ENCODE measurements at regions of chr9 and their contacts with region 1.

Region 1: DNA sequence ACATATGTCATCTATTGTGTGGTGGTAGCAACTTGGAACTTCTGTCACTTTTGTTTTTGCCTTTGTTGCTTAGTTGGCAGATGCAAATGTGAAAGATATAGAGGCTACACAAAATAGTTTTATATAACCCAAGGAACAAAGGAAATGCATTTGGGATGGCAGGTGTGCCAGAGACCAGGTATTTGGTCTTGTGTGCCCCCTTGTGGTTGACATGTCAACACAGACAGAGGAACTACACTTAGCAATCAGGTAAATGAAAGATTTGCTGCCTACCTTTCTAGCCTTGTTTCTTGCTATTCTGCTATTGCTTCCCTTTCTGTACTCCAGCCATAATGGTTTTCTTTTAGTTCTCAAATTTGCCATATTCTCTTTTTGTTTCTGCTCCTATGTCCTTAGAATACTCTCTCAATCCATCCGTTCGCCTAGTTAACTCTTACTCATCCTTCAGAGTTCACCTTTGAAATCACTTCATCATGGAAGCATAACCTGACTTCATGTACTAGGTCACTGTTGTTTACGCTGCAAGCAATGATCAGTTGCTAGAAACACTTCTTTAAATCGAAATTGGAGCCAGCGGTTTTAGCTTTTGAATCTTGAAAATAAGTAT is 119.5 kb downstream of the TRPM3 start:
- DNase-seq: peak; percentile 61
- H3K4me3 Mint-ChIP-seq: no peak overlapping the region
- H3K27ac Mint-ChIP-seq: no peak overlapping the region
- H3K4me1 Mint-ChIP-seq: no peaks in the 10 kb centered on the region
- H3K27me3 Mint-ChIP-seq: no peaks in the 10 kb centered on the region

Region 2: DNA sequence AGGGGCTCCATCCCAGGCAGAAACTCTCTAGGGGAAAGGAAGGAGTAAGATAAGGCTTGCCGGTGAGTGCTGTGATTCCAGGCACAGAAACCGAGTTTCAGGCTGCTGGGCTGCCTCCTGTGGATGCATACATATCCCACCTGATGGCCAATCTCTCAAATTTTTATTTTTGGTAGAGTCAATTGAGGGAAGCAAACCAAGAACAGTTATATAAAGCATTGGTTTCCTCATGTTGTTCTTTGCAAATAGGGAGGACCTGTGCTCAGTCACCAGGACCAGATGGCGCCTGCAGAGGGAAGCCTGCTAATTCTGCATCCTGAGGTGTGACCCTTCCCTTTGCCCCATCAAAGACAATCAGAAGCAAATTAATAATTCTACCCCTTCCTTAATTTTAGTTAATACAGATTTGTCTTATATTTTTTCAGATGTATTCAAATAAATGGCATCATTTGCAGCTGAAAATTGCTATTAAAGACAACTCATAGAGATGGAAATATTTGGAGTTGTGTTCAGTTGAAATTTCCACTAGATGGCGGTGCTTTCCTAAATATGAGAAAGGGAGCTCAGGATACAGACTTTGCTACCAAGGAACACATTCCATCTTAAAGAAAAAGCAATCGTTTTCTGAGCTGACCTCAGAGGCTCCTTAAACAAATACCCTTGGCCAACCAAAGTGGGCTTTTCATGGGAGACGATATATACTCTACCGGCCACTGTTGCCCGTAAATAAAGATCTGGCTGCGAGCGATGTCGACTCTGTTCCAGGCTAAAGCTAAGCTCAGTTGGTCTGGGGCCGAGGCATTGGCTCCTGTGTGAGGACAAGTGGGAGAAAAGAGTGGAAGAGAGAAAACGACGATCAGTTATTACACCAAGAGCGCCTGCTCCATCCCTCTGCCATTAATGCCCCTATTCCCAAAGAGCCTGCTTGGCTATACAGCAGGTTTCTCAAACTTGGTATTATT is 361.7 kb before region 1 on chr9:
- intact Hi-C with region 1: loop called (anchors 2 kb)
- DNase-seq: peak; percentile 63
- H3K4me3 Mint-ChIP-seq: no peak overlapping the region
- H3K27ac Mint-ChIP-seq: no peak overlapping the region
- H3K4me1 Mint-ChIP-seq: no peaks in the 10 kb centered on the region
- H3K27me3 Mint-ChIP-seq: peaks cover 5% of the 10 kb centered on the region

Region 3: DNA sequence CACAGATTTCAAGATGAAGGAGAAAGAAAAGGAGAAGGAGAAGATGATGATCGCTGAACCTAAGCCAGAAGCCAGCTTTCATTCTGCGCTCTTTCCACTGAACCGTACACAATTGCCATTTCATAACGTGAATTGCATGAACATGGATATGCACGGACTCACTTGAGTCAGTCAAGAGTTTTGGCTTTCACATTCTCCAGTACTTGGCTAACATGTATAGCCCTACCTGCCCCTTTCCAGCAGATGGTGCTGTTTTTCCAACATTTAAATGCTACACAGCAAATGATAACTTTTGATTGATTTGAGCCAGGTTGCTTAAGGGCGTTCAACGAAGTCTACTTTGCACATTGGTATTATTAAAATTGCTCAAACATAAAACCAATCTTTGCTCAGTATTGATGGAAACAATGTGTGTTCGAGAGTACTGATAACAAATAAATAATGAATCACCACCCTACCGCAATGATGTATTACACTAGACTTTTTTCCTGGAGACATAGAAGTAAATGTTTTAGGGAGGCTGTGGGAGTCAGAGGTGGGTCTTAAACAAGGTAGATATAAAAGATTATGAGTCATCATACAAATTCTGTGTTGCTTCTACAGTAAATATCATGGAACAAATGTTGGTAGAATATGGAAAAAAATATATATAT is 76.9 kb before region 1 on chr9:
- intact Hi-C with region 1: loop called (anchors 10 kb)
- DNase-seq: peak; percentile 68
- H3K4me3 Mint-ChIP-seq: no peak overlapping the region
- H3K27ac Mint-ChIP-seq: no peak overlapping the region
- H3K4me1 Mint-ChIP-seq: no peaks in the 10 kb centered on the region
- H3K27me3 Mint-ChIP-seq: peaks cover 2% of the 10 kb centered on the region